Heart left ventricle (tissue), 16 donors: ENCODE measurements at regions of chr6 and their contacts with region 1.

Region 1: GRCh38 chr6:27059621-27060425 is 187.7 kb upstream of the PRSS16 start:
- DNase-seq: no peak
- ATAC-seq: no peak
- H3K4me3 ChIP-seq: no peak overlapping the region
- H3K27ac ChIP-seq: no peak overlapping the region
- H3K4me1 ChIP-seq: no peaks in the 10 kb centered on the region
- H3K27me3 ChIP-seq: peaks cover 0 to 18% (median 0%) of the 10 kb centered on the region in 9 donors
- CTCF ChIP-seq: no peak
- POLR2A ChIP-seq: no peak

Region 2: DNA sequence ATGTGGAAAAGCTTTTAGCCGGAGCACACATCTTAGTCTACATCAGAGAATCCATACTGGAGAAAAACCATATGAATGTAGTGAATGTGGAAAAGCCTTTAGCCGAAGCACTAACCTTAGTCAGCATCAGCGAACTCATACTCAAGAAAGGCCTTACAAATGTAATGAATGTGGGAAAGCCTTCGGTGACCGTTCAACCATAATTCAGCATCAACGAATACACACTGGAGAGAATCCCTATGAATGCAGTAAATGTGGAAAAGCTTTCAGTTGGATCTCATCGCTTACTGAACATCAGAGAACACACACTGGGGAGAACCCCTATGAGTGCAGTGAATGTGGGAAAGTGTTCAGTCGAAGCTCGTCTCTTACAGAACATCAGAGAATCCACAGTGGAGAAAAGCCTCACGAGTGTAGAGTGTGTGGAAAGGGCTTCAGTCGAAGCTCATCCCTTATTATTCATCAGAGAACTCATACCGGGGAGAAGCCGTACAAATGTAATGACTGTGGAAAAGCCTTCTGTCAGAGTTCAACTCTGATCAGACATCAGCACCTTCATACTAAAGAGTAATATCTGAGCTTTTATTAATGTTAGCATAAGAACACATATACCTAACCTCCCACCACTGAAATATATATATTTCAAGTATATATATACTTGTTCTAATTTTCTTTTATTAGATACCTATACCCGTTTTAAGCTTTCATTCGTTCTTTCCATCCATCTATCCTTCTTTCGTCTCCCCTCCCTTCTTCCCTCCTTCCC is 341.2 kb after region 1 on chr6:
- intact Hi-C with region 1: loop called in 1 of 10 experiments (anchors 5 kb)
- DNase-seq: no peak
- ATAC-seq: no peak
- H3K4me3 ChIP-seq: no peak overlapping the region
- H3K27ac ChIP-seq: no peak overlapping the region
- H3K4me1 ChIP-seq: no peaks in the 10 kb centered on the region
- H3K27me3 ChIP-seq: no peaks in the 10 kb centered on the region
- CTCF ChIP-seq: no peak
- POLR2A ChIP-seq: no peak